Activated T-helper 1 cell treated with anti-CD3 and anti-CD28 coated beads, Interleukin-12 subunit alpha, Interleukin-12 subunit beta, Interleukin-2, Interleukin-4 antibody, amounts not matched to agents 30 ng/mL and 10 ng/mL and 1 ng/mL, durations not matched to agents 14 hours and 24 hours and 36 hours (primary cell): ENCODE measurements at regions of chr1 and their contacts with region 1.

Region 1: GRCh38 chr1:222792744-222793143 is 22.1 kb upstream of the DISP1 start:
- DNase-seq: no peak
- H3K4me3 Mint-ChIP-seq: no peak overlapping the region
- H3K27ac Mint-ChIP-seq: no peak overlapping the region
- H3K4me1 Mint-ChIP-seq: peaks cover 12% of the 10 kb centered on the region
- H3K27me3 Mint-ChIP-seq: peaks cover 9% of the 10 kb centered on the region

Region 2: GRCh38 chr1:222732216-222733159 is 60.3 kb before region 1 on chr1:
- intact Hi-C with region 1: loop called (anchors 5 kb)
- DNase-seq: no peak
- H3K4me3 Mint-ChIP-seq: no peak overlapping the region
- H3K27ac Mint-ChIP-seq: peak overlapping the region; percentile 35
- H3K4me1 Mint-ChIP-seq: peaks cover 13% of the 10 kb centered on the region
- H3K27me3 Mint-ChIP-seq: no peaks in the 10 kb centered on the region

Region 3: DNA sequence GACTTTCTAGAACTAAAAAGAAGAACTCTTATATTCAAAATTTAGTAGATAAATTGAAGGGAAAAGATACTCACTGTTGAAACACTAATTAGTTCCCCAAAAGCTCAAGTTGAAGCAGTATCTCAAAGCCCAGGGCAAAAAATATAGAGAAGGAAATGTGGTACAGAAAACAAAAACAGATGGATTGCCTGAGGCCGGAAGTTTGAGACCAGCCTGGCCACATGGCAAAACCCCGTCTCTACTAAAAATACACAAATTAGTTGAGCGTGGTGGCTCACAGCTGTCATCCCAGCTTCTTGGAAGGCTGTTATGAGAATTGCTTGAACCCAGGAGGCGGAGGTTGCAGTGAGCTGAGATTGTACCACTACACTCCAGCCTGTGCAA is 19.8 kb before region 1 on chr1:
- intact Hi-C with region 1: no loop called
- DNase-seq: no peak
- H3K4me3 Mint-ChIP-seq: no peak overlapping the region
- H3K27ac Mint-ChIP-seq: no peak overlapping the region
- H3K4me1 Mint-ChIP-seq: peaks cover 10% of the 10 kb centered on the region
- H3K27me3 Mint-ChIP-seq: peaks cover 9% of the 10 kb centered on the region

Region 4: DNA sequence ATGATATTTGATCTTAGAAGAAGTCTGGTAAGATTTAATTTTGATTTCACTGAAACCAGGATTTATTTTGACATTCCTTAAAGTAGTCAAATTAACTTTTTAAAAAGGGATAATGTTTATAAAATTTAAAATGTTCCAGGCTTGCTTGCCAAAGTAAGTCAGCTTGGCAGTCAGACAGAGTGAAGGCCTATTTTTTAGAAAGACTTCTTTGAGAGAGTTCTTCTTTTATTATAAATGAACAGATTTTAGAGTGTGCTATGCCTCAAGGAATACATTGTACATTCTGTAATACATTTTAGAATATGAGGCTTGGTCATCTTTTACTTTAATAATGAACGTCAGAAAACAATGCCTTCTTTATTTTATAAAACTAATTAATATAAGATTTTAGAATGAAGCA is 160.8 kb after region 1 on chr1:
- intact Hi-C with region 1: no loop called
- DNase-seq: no peak
- H3K4me3 Mint-ChIP-seq: no peak overlapping the region
- H3K27ac Mint-ChIP-seq: no peak overlapping the region
- H3K4me1 Mint-ChIP-seq: no peaks in the 10 kb centered on the region
- H3K27me3 Mint-ChIP-seq: no peaks in the 10 kb centered on the region

Region 5: GRCh38 chr1:223081181-223081994 is 288.6 kb after region 1 on chr1:
- intact Hi-C with region 1: loop called (anchors 1 kb)
- DNase-seq: peak; percentile 45
- H3K4me3 Mint-ChIP-seq: peak overlapping the region; percentile 24
- H3K27ac Mint-ChIP-seq: peak overlapping the region; percentile 6
- H3K4me1 Mint-ChIP-seq: no peaks in the 10 kb centered on the region
- H3K27me3 Mint-ChIP-seq: peaks cover 4% of the 10 kb centered on the region

Region 6: GRCh38 chr1:223087291-223088255 is 294.8 kb after region 1 on chr1:
- intact Hi-C with region 1: loop called (anchors 1 kb)
- DNase-seq: no peak
- H3K4me3 Mint-ChIP-seq: no peak overlapping the region
- H3K27ac Mint-ChIP-seq: no peak overlapping the region
- H3K4me1 Mint-ChIP-seq: no peaks in the 10 kb centered on the region
- H3K27me3 Mint-ChIP-seq: peaks cover 7% of the 10 kb centered on the region

Region 7: DNA sequence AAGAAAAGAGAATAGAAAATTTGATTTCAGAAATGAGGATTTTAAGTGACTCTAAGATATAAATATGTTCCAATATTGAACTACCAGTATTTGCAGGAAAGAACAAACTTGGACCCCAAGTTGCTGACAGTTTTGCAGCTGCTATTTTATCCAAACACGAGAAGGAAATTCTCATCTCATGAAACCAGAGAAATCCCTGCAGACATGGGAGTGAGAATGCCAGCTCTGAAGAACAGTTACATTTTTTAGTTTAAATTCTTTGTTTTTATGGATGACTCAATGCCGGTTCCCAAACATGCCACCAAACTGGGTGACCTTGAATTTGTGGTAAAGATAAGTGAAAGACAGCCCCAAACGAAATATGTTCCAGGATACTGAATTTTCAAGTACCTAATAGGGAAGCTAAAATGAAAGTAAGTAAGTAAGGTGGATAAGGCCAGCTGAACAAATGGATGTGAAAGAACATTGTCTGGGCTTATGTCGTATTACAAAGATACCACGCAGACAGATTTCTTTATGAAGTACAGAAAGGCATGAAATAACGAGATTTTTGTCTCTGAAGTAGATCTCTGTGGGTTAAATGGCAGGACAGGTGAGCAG is 330.4 kb after region 1 on chr1:
- intact Hi-C with region 1: loop called (anchors 1 kb)
- DNase-seq: no peak
- H3K4me3 Mint-ChIP-seq: peak overlapping the region; percentile 31
- H3K27ac Mint-ChIP-seq: no peak overlapping the region
- H3K4me1 Mint-ChIP-seq: peaks cover 8% of the 10 kb centered on the region
- H3K27me3 Mint-ChIP-seq: peaks cover 7% of the 10 kb centered on the region